ENCODE measurements at regions of chr1 and their contacts with region 1.

Region 1: DNA sequence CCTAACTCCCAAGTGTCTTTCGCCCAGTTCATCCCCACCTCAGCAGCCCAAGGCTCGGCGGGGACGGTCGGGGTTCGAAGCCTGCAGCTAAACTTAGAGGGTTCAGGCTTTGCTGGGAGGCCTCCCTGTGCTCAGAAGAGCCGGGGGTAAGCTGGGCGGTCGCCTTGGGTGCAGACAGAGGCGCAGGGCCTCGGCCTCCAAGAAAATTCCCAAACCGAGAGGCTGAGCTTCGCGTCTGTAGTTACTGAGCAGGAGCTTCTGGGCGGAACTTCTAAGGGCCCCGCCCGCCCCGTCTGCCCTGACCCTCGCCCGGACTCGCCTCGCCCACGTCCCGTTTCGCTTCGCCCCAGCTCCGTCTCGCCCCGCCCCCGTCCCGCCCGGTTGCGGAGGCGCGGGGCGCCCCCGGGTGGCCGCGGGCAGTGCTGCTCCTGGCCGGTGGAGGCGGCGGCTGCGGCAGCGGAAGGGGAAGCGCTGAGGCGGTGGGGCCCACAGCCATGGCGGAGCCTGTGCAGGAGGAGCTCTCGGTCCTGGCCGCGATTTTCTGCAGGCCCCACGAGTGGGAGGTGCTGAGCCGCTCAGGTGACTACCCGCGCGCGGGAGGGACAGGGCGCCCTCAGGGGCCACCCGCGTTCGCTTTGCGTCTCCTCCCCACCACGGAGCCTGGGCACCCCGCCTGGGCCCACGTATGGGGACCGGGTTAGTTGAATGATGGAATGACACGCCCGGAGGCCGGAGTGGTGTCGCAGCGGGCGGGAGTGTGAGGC is at the start of gene RWDD3:
- DNase-seq: peak; percentile 47
- H3K4me3 ChIP-seq: peak within 1 kb of the TSS; percentile 66
- H3K27me3 ChIP-seq: no peaks in the 10 kb centered on the region
- CTCF ChIP-seq: peak; percentile 40
- polyA plus RNA-seq, gene RWDD3: 11.1 and 15.6 TPM in 2 replicates

Region 2: DNA sequence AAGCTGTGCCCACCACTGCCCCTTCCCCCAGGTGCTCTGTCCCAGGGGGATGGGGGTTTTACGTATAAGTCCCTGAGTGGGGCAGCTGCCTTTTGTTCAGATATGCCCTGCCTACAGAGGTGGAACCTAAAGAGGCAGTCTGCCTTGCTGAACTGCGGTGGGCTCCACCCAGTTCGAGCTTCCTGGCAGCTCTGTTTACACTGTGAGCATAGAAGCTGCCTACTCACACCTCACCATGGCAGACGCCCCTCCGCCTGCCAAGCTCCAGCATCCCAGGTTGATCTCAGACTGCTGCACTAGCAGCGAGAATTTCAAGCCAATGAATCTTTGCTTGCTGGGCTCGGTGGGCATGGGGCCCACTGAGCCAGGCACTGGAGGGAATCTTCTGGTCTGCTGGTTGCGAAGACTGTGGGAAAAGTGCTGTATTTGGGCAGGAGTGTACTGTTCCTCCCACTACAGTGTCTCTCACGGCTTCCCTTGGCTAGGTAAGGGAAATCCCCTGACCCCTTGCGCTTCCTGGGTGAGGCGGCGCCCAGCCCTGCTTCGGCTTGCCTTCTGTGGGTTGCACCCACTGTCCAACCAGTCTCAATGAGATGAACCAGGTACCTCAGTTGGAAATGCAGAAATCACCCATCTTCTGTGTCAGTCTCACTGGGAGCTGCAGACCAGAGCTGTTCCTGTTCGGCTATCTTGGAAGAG is 17.5 kb before region 1 on chr1:
- CTCF ChIA-PET with region 1: no interaction called
- POLR2A ChIA-PET with region 1: no interaction called
- DNase-seq: no peak
- H3K4me3 ChIP-seq: no peak overlapping the region
- H3K27me3 ChIP-seq: no peaks in the 10 kb centered on the region; the same call in 1 of the 2 replicates
- CTCF ChIP-seq: no peak

Region 3: DNA sequence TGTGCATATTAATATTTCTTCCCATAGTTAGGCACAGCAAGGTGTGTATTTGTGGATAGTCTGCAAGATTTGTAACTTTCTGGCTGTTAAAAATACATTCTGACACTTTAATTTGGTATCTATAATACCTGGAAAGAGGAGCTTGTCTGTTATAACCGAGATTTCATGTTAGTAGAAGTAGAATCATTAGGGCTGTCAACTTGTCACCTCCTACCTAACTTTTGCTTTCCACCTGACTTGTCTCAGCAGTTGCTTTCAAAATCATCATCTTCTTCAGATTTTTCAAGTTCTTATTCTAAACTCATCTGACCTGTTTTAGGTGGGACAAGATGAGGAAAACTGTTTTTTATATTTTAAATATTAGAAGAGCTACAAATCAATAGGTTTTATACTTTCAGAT is 11.1 kb after region 1 on chr1:
- CTCF ChIA-PET with region 1: interaction called, 16 read pairs
- POLR2A ChIA-PET with region 1: interaction called, 5 read pairs
- DNase-seq: no peak
- H3K4me3 ChIP-seq: no peak overlapping the region
- H3K27me3 ChIP-seq: no peaks in the 10 kb centered on the region
- CTCF ChIP-seq: no peak